ENCODE measurements at regions of chr15 and their contacts with region 1.

Region 1: DNA sequence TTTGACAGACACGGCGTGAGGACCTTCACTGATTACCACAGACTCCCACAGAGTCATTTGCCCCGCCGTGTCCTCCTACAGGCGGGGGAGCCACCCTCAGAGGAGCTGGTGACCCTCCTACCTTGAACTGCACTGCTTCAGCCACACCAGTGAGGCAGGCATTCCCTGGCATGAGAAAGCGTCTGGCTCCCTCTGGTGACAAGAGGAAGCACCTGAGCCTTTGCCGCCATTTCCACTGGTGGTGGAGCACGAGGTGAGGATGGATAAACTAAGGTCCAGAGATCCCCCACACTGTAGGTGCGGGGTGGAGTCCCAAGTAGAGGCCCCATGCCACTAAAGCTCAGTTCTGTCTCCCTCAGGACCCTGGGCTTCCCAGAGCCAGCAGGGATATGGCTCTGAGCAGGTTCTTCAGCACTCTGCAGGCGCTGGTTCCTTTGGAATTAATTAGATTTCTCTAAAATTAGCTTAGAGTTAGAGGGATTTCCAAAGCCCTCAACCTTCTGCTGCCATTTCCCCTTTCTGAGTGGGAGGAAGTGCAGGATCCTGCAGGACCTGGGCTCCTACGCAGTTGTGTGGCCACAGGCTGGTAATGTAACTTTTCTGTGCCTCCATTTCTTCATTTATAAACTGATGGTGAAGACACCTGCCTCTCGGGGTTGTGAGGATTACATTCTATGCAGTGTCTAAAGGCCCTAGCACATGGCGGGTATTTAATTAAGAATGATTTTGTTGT is 224.0 kb downstream of the SLCO3A1 start:
- DNase-seq: peak; percentile 84
- H3K4me3 Mint-ChIP-seq: no peak overlapping the region
- H3K27ac Mint-ChIP-seq: no peak overlapping the region
- H3K4me1 Mint-ChIP-seq: peaks cover 34% of the 10 kb centered on the region
- H3K27me3 Mint-ChIP-seq: no peaks in the 10 kb centered on the region

Region 2: DNA sequence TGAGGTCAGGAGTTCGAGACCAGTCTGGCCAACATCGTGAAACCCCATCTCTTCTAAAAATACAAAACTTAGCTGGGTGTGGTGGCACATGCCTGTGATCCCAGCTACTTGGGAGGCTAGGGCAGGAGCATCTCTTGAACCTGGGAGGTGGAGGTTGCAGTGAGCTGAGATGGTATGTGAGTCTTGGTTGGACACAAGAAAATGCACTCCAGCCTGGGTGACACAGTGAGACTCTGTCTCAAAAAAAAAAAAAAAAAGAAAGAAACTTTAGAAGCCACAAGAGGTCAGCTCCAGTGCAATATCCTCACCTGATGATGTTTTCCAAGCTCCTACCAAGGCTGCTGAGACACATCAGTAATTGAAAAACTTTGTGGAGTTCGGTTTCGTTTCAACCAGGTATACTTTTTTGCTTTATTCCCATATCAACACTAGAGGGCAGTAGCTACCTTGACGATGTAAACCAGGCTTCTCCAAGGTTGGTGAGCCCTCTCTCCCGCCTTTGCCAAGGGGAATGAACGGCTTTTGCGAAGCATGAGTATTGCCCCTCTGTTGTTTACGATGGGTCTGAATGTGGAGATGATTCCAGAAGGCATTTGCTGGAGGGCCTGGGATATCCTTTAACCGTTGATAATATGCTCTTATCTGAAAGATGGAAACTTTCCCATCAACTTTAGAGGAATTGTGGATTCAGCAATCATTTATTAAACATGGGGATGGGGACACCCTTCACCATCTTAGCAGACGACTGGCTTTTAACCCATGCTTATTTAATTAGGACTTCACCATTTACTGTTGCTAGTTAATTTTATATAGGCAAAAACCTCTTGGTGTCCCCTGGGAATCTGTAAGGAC is 774.7 kb before region 1 on chr15:
- CTCF ChIA-PET with region 1: interaction called, 44 read pairs
- POLR2A ChIA-PET with region 1: no interaction called
- intact Hi-C with region 1: loop called (anchors 2 kb)
- DNase-seq: peak; percentile 28
- H3K4me3 Mint-ChIP-seq: no peak overlapping the region
- H3K27ac Mint-ChIP-seq: no peak overlapping the region
- H3K4me1 Mint-ChIP-seq: peaks cover 21% of the 10 kb centered on the region
- H3K27me3 Mint-ChIP-seq: peaks cover 10% of the 10 kb centered on the region

Region 3: GRCh38 chr15:91885714-91886270 is 191.7 kb before region 1 on chr15:
- CTCF ChIA-PET with region 1: interaction called, 5 read pairs
- POLR2A ChIA-PET with region 1: no interaction called
- intact Hi-C with region 1: loop called (anchors 2 kb)
- DNase-seq: peak; percentile 41
- H3K4me3 Mint-ChIP-seq: no peak overlapping the region
- H3K27ac Mint-ChIP-seq: no peak overlapping the region
- H3K4me1 Mint-ChIP-seq: peaks cover 35% of the 10 kb centered on the region
- H3K27me3 Mint-ChIP-seq: no peaks in the 10 kb centered on the region

Region 4: GRCh38 chr15:92091155-92091734 is 13.7 kb after region 1 on chr15:
- CTCF ChIA-PET with region 1: interaction called, 12 read pairs
- POLR2A ChIA-PET with region 1: no interaction called
- intact Hi-C with region 1: no loop called
- DNase-seq: peak; percentile 31
- H3K4me3 Mint-ChIP-seq: no peak overlapping the region
- H3K27ac Mint-ChIP-seq: no peak overlapping the region
- H3K4me1 Mint-ChIP-seq: peaks cover 25% of the 10 kb centered on the region
- H3K27me3 Mint-ChIP-seq: no peaks in the 10 kb centered on the region

Measured in activated CD4-positive, alpha-beta memory T cell treated with anti-CD3 and anti-CD28 coated beads for 36 hours (primary cell).